ENCODE measurements at regions of chr19 and their contacts with region 1.

Region 1: GRCh38 chr19:14786421-14786851 is 8.1 kb upstream of the ADGRE2 start:
- DNase-seq: no peak
- H3K4me3 ChIP-seq: peak overlapping the region; percentile 48; the same call in 1 of the 2 replicates
- H3K27ac ChIP-seq: no peak overlapping the region
- H3K4me1 ChIP-seq: peaks cover 9% of the 10 kb centered on the region
- H3K27me3 ChIP-seq: no peaks in the 10 kb centered on the region
- CTCF ChIP-seq: peak; percentile 90

Region 2: GRCh38 chr19:14689598-14690503 is 96.6 kb before region 1 on chr19 and contains the start of gene ZNF333:
- CTCF ChIA-PET with region 1: interaction called, 7 read pairs
- POLR2A ChIA-PET with region 1: interaction called, 13 read pairs
- intact Hi-C with region 1: no loop called
- DNase-seq: peak; percentile 78 to 92
- H3K4me3 ChIP-seq: peak within 1 kb of the TSS; percentile 69
- H3K27ac ChIP-seq: peak within 1 kb of the TSS; percentile 88
- H3K4me1 ChIP-seq: peaks cover 16% of the 10 kb centered on the region
- H3K27me3 ChIP-seq: no peaks in the 10 kb centered on the region
- CTCF ChIP-seq: no peak
- total RNA-seq, gene ZNF333: 10.1 and 10.5 TPM in 2 replicates

Region 3: GRCh38 chr19:14775869-14776586 is 10.4 kb before region 1 on chr19:
- CTCF ChIA-PET with region 1: no interaction called
- POLR2A ChIA-PET with region 1: no interaction called
- intact Hi-C with region 1: no loop called
- DNase-seq: no peak
- H3K4me3 ChIP-seq: peak overlapping the region; percentile 65
- H3K27ac ChIP-seq: no peak overlapping the region
- H3K4me1 ChIP-seq: no peaks in the 10 kb centered on the region; the same call in 1 of the 2 replicates
- H3K27me3 ChIP-seq: no peaks in the 10 kb centered on the region
- CTCF ChIP-seq: no peak

Region 4: DNA sequence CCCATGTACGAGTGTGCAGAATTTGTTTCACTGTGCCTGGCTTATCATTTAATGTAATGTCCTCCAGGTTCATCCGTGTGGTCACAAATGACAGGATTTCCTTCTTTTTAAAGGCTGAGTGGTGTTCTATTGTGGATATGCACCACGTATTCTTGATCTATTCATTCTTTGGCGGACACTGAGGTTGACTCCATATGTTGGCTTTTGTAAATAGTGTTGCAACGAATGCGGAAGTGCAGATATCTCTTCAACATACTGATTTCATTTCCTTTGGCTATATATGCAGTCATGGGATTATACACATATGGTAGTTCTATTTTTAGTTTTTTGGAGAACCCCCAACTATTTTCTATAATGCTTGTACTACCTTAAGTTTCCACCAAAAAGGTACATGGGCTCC is 35.5 kb after region 1 on chr19:
- CTCF ChIA-PET with region 1: no interaction called
- POLR2A ChIA-PET with region 1: no interaction called
- intact Hi-C with region 1: no loop called
- DNase-seq: no peak
- H3K4me3 ChIP-seq: no peak overlapping the region
- H3K27ac ChIP-seq: no peak overlapping the region
- H3K4me1 ChIP-seq: no peaks in the 10 kb centered on the region
- H3K27me3 ChIP-seq: peaks cover 16% of the 10 kb centered on the region; the same call in 1 of the 2 replicates
- CTCF ChIP-seq: no peak

Region 5: GRCh38 chr19:14901675-14902260 is 115.3 kb after region 1 on chr19:
- CTCF ChIA-PET with region 1: interaction called, 12 read pairs
- POLR2A ChIA-PET with region 1: no interaction called
- intact Hi-C with region 1: no loop called
- DNase-seq: peak in 1 of 2 experiments; percentile 64
- H3K4me3 ChIP-seq: no peak overlapping the region
- H3K27ac ChIP-seq: peak overlapping the region; percentile 10; the same call in 1 of the 2 replicates
- H3K4me1 ChIP-seq: peaks cover 9% of the 10 kb centered on the region
- H3K27me3 ChIP-seq: no peaks in the 10 kb centered on the region
- CTCF ChIP-seq: no peak

Measured in PC-9 (cell line).